ENCODE measurements at regions of chr2 and their contacts with region 1.

Region 1: DNA sequence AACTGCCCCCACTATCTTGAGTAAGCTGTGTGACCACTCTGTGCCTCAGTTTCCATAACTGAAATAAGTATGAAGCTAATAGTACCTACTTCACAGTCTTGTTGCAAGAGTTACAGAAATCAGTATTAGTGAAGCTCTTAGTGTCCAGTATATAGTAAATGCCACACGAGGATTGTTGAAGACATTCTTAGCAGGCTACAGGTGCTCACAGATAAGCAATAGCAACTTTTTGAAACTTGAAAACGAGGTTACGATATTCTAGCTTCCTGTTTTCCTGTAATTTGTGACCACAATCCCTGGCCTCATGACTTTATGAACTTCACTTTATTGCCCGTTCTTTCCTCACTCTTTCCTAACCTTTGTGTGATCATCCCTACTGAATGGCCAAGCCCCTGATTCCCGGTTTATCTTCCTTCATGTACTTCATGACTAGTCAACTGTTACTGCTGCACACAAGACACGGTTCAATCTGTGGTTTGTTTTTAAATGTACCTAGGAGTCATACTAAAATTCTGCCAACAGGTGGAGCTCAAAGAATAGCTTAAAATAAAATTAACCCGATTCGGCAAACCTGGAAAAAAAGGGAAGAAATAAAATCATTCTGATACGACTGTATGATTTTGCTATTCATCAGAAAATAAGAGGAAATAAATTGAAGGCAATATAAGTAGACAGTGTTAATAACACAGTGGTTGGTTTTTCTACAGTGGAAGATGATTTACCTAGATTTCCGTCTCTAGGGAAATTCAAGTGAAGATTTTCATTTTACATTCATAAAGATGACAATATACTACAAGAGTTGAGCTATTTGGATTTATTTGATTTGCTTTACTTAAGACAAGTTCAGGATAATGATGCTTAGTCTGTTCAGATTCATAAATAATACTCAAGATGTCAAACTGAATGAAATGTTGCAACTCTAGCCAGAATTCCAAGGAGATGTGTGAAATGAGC is 38.1 kb upstream of the STAT1 start:
- DNase-seq: no peak
- H3K4me3 Mint-ChIP-seq: no peak overlapping the region
- H3K27ac Mint-ChIP-seq: no peak overlapping the region
- H3K4me1 Mint-ChIP-seq: peaks cover 21% of the 10 kb centered on the region
- H3K27me3 Mint-ChIP-seq: no peaks in the 10 kb centered on the region

Region 2: DNA sequence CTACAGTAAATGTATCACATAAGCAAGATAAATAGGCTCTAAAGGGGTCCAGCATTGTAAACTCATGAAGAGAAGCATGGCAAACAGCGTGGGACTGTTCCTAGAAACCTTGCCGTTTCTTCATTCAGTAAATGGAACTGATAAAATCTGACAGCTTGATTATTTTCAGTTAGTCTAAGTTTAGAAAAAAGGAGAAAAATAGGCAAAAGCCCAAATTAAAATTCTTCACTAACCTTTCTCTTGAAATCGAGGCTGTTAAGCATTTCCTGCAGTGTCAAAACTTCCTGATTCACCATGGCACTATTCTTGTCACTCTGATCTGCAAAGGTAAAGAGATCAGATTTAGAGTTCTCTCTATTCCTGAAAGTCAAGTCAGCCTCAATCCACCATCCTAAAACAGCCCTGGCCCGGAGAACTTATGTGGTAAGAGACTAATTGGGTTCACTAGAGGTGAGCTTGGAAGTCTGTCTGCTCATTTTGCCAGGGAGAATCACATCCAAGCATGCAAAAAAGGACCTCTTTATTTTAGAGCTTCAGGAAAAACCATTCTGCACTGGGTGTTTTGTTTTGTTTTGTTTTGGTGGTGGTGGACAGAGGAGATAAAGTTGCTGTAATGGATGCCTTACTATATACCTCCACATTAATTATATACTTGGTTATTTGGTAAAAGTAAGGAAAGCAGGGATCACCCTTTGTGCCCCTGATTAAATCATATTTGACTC is 14.3 kb after region 1 on chr2:
- CTCF ChIA-PET with region 1: interaction called, 30 read pairs
- POLR2A ChIA-PET with region 1: interaction called, 3 read pairs
- intact Hi-C with region 1: no loop called
- DNase-seq: peak; percentile 26
- H3K4me3 Mint-ChIP-seq: peak overlapping the region; percentile 63
- H3K27ac Mint-ChIP-seq: peak overlapping the region; percentile 85
- H3K4me1 Mint-ChIP-seq: peaks cover 79% of the 10 kb centered on the region
- H3K27me3 Mint-ChIP-seq: no peaks in the 10 kb centered on the region

Region 3: DNA sequence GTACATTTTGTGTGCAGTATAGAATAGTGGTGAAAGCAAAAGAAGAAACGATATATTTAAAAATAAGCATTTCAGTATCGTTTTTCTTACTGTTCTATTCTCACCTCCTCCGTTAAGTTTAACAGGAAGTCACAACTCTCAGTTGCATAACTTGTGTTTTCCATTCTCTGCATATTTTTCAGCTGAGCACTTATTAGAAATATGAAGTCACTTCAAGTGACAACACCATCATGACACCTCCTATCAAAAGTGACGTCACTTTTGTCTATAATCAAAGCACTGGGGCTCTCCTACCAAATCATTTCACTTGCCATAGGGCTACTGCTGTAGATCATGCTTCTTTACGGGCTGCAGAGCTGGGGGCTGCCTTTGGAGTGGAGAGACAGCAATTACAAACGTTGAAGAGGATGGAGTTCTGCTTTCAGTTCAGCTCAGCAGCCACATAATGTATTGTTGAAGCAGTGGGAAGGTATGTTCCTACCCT is 62.3 kb after region 1 on chr2:
- CTCF ChIA-PET with region 1: interaction called, 11 read pairs
- POLR2A ChIA-PET with region 1: interaction called, 3 read pairs
- intact Hi-C with region 1: no loop called
- DNase-seq: peak; percentile 57
- H3K4me3 Mint-ChIP-seq: peak overlapping the region; percentile 66
- H3K27ac Mint-ChIP-seq: peak overlapping the region; percentile 88
- H3K4me1 Mint-ChIP-seq: peaks cover 70% of the 10 kb centered on the region
- H3K27me3 Mint-ChIP-seq: no peaks in the 10 kb centered on the region

Region 4: GRCh38 chr2:191144217-191144616 is 92.1 kb after region 1 on chr2:
- CTCF ChIA-PET with region 1: interaction called, 58 read pairs
- POLR2A ChIA-PET with region 1: interaction called, 3 read pairs
- intact Hi-C with region 1: no loop called
- DNase-seq: no peak
- H3K4me3 Mint-ChIP-seq: no peak overlapping the region
- H3K27ac Mint-ChIP-seq: peak overlapping the region; percentile 9
- H3K4me1 Mint-ChIP-seq: peaks cover 69% of the 10 kb centered on the region
- H3K27me3 Mint-ChIP-seq: no peaks in the 10 kb centered on the region

Region 5: GRCh38 chr2:191165176-191165643 is 113.1 kb after region 1 on chr2:
- CTCF ChIA-PET with region 1: interaction called, 53 read pairs
- POLR2A ChIA-PET with region 1: no interaction called
- intact Hi-C with region 1: no loop called
- DNase-seq: no peak
- H3K4me3 Mint-ChIP-seq: no peak overlapping the region
- H3K27ac Mint-ChIP-seq: no peak overlapping the region
- H3K4me1 Mint-ChIP-seq: peaks cover 13% of the 10 kb centered on the region
- H3K27me3 Mint-ChIP-seq: no peaks in the 10 kb centered on the region

Region 6: GRCh38 chr2:191202881-191203397 is 150.8 kb after region 1 on chr2:
- CTCF ChIA-PET with region 1: no interaction called
- POLR2A ChIA-PET with region 1: no interaction called
- intact Hi-C with region 1: no loop called
- DNase-seq: peak; percentile 42
- H3K4me3 Mint-ChIP-seq: no peak overlapping the region
- H3K27ac Mint-ChIP-seq: peak overlapping the region; percentile 70
- H3K4me1 Mint-ChIP-seq: peaks cover 46% of the 10 kb centered on the region
- H3K27me3 Mint-ChIP-seq: no peaks in the 10 kb centered on the region

Region 7: DNA sequence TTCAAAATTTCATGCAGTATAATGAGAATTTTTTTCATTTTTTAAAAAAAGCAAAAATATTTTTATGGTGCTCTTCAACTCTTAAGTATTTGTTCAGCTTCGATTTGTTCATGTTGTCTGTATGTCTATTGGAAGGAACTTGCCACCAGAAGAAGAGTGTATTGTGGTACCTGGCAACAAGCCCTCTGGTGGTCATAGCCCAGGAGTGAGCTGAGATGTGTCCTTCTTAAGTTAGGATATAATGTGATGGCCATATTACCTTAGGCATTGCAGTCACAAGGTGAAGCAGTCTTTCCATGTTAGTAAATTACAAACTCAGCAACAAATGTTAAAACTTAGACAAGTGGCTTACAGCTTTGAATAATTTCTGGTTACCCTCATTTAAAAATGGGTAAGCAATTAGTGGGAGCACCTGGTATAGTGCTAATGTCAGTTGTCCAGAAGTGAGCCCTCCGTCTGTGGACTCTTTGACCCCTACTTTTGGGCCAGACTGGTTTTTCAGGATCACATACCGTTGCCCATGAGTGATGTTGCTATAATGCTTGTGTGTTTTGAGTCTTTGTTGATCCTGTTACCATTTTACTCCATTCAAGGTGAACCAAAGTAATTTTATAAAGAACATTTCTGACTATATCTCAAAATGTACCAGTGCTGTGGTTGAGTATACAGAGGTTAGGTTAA is 250.5 kb after region 1 on chr2:
- CTCF ChIA-PET with region 1: interaction called, 12 read pairs
- POLR2A ChIA-PET with region 1: no interaction called
- intact Hi-C with region 1: no loop called
- DNase-seq: peak; percentile 15
- H3K4me3 Mint-ChIP-seq: no peak overlapping the region
- H3K27ac Mint-ChIP-seq: no peak overlapping the region
- H3K4me1 Mint-ChIP-seq: no peaks in the 10 kb centered on the region
- H3K27me3 Mint-ChIP-seq: no peaks in the 10 kb centered on the region

Region 8: GRCh38 chr2:191521608-191522208 is 469.6 kb after region 1 on chr2:
- CTCF ChIA-PET with region 1: interaction called, 13 read pairs
- POLR2A ChIA-PET with region 1: no interaction called
- intact Hi-C with region 1: loop called (anchors 2 kb)
- DNase-seq: no peak
- H3K4me3 Mint-ChIP-seq: no peak overlapping the region
- H3K27ac Mint-ChIP-seq: no peak overlapping the region
- H3K4me1 Mint-ChIP-seq: no peaks in the 10 kb centered on the region
- H3K27me3 Mint-ChIP-seq: peaks cover 1% of the 10 kb centered on the region